ENCODE measurements at regions of chr6 and their contacts with region 1.

Region 1: GRCh38 chr6:138765896-138766655 is 7.5 kb upstream of the CCDC28A start:
- DNase-seq: no peak
- H3K4me3 ChIP-seq: no peak overlapping the region
- H3K27ac ChIP-seq: no peak overlapping the region
- H3K4me1 ChIP-seq: no peaks in the 10 kb centered on the region
- H3K27me3 ChIP-seq: no peaks in the 10 kb centered on the region
- CTCF ChIP-seq: peak; percentile 79

Region 2: GRCh38 chr6:138588805-138589434 is 177.2 kb before region 1 on chr6:
- intact Hi-C with region 1: loop called (anchors 5 kb)
- DNase-seq: peak; percentile 38
- H3K4me3 ChIP-seq: no peak overlapping the region
- H3K27ac ChIP-seq: no peak overlapping the region
- H3K4me1 ChIP-seq: peaks cover 21% of the 10 kb centered on the region
- H3K27me3 ChIP-seq: no peaks in the 10 kb centered on the region
- CTCF ChIP-seq: peak; percentile 95

Region 3: GRCh38 chr6:138695193-138695592 is 70.9 kb before region 1 on chr6:
- intact Hi-C with region 1: loop called (anchors 5 kb)
- DNase-seq: no peak
- H3K4me3 ChIP-seq: no peak overlapping the region
- H3K27ac ChIP-seq: no peak overlapping the region
- H3K4me1 ChIP-seq: peaks cover 11% of the 10 kb centered on the region
- H3K27me3 ChIP-seq: no peaks in the 10 kb centered on the region
- CTCF ChIP-seq: no peak

Measured in left ventricle myocardium inferior (tissue), 1 donor.